GM13977 (cell line): ENCODE measurements at regions of chr3 and their contacts with region 1.

Region 1: GRCh38 chr3:120417272-120417911 is 33.4 kb downstream of the FSTL1 start:
- DNase-seq: peak; percentile 94
- CTCF ChIP-seq: peak; percentile 82

Region 2: GRCh38 chr3:119891944-119892721 is 525.3 kb before region 1 on chr3:
- in situ Hi-C with region 1: loop called (anchors 25 kb)
- DNase-seq: peak; percentile 8
- CTCF ChIP-seq: peak; percentile 73